Transverse colon (tissue), 4 donors: ENCODE measurements at regions of chr9 and their contacts with region 1.

Region 1: GRCh38 chr9:9170439-9171134 is 1371.0 kb upstream of the DMAC1 start:
- DNase-seq: no peak
- H3K4me3 ChIP-seq: no peak overlapping the region
- H3K27ac ChIP-seq: no peak overlapping the region
- H3K4me1 ChIP-seq: no peaks in the 10 kb centered on the region
- H3K27me3 ChIP-seq: no peaks in the 10 kb centered on the region
- CTCF ChIP-seq: no peak
- EP300 ChIP-seq: no peak
- POLR2A ChIP-seq: no peak

Region 2: DNA sequence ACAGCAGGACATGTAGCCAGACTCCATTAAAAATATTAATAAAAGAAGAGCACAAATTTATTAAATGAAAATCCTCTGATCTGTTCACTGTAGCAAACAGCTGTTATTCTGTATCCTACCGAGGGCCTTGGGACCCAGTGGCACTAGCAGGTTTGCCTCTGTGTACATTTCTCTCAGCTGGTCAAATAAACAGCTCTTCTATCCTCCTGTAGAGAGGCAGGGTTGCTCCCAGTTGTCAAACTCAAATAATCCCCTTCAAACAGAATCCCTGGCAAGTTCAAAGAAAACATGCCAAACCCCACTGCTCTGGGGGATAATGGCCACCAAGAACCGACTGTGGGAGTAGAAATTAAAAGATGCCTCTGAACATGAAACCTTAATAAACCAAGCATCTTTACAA is 109.0 kb before region 1 on chr9:
- in situ Hi-C with region 1: loop called in 1 of 4 experiments (anchors 25 kb)
- intact Hi-C with region 1: no loop called
- DNase-seq: no peak
- H3K4me3 ChIP-seq: no peak overlapping the region
- H3K27ac ChIP-seq: no peak overlapping the region
- H3K4me1 ChIP-seq: no peaks in the 10 kb centered on the region
- H3K27me3 ChIP-seq: no peaks in the 10 kb centered on the region
- CTCF ChIP-seq: no peak
- EP300 ChIP-seq: no peak
- POLR2A ChIP-seq: no peak